ENCODE measurements at regions of chr1 and their contacts with region 1.

Region 1: DNA sequence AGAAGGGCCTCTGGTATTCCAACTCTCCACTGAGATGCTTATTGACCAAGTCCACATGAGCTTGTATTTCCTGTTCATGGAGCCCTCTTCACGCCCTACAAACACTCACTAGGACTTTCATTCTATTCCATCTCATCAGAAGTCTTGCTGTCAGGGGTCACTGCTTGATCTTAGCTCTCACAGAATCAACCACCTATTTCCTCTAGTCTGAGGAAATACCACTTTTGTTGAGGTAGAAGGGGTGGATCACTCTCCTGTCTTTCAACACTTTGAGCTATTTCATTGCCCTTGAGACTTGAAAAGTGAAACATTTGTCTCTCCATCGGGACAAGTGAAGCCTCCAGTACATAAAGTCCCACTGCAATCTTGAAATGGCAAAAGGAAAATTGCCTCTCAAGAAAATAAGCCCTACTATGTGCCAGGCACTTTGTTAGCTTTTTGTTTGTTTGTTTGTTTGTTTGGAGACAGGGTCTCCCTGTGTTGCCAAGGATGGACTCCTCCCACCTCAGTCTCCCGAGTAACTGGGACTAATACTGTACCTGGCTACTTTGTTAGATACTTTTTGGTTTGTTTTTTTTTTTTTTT is 19.8 kb upstream of the FAM110D start:
- DNase-seq: no peak
- H3K4me3 Mint-ChIP-seq: peak overlapping the region; percentile 18
- H3K27ac Mint-ChIP-seq: peak overlapping the region; percentile 44
- H3K4me1 Mint-ChIP-seq: peaks cover 16% of the 10 kb centered on the region
- H3K27me3 Mint-ChIP-seq: no peaks in the 10 kb centered on the region

Region 2: GRCh38 chr1:26126321-26127084 is 12.6 kb before region 1 on chr1:
- CTCF ChIA-PET with region 1: interaction called, 21 read pairs
- POLR2A ChIA-PET with region 1: interaction called, 7 read pairs
- DNase-seq: peak; percentile 83
- H3K4me3 Mint-ChIP-seq: peak overlapping the region; percentile 80
- H3K27ac Mint-ChIP-seq: peak overlapping the region; percentile 99
- H3K4me1 Mint-ChIP-seq: peaks cover 68% of the 10 kb centered on the region
- H3K27me3 Mint-ChIP-seq: no peaks in the 10 kb centered on the region